HCT116 (cell line): ENCODE measurements at regions of chr20 and their contacts with region 1.

Region 1: DNA sequence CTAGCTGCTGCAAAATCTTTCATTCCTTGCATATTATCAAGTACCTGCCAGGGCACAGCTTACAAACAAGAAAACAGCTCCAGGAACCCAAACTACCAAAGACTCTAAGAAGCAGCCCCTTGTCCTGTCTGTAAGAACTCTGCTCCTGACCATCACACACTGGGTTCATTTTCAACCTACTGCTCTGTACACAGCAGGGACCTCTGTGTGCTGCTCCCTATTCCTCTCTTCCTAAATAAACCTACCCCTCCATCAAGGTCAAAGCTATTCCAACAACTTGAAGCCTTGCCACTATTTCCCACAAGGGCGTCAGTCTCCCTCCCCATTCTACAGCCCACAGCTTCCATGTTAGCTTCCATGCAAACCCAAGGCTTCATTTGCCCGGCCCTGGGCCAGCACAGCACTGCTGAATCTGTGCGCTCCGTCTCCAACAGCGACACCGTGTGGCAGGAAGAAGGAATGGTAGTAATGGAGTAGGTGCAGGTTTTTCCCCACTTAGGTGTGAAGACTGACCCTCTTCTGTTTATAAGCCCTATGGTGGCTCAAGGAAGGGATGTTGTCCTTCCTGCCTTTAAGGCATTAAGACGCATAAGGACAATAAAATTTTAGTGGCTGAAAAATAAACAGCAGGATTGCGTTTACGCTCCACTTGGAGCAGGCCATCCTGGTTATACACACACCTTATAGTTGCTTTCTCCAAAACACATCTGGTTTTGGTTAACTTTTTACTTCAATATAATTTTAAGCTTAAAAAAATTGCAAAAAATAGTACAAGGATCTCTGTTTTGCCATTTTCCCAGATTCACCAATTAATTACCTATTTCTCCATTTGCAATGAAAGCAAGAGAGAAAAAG is 115.2 kb upstream of the NXT1 start:
- DNase-seq: peak; percentile 52
- ATAC-seq: peak; percentile 98
- H3K4me3 ChIP-seq: no peak overlapping the region
- H3K27ac ChIP-seq: no peak overlapping the region
- H3K4me1 ChIP-seq: peaks cover 0 to 12% of the 10 kb centered on the region in 2 experiments; a peak in 2 of 4 replicates
- H3K27me3 ChIP-seq: peaks cover 8% of the 10 kb centered on the region
- CTCF ChIP-seq: peak; percentile 69 to 93 (median 86)
- POLR2A ChIP-seq: no peak
- RAD21 ChIP-seq: peak; percentile 74

Region 2: DNA sequence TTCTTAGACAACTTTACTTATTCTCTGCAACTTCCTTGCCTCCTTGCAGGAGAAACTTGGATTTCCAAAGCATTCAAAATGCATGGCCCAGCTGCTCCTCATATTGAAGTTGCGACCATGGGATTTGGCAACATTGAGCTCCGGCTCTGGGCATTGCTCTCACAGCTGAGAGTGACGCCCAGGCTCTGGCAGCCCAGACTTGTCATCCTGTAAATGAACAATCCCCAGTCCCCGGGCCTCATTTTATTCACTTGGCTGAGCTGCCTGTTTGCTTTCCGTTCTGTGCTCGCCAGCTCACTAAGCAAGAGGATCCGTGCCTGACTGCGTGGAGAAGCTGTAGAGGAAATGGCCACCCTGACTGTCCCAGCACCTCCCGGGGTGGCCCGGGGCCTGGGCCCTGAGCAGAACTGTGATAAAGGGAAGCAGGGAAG is 29.8 kb before region 1 on chr20:
- CTCF ChIA-PET with region 1: no interaction called
- POLR2A ChIA-PET with region 1: no interaction called
- RAD21 ChIA-PET with region 1: no interaction called
- intact Hi-C with region 1: no loop called
- DNase-seq: no peak
- ATAC-seq: no peak
- H3K4me3 ChIP-seq: no peak overlapping the region
- H3K27ac ChIP-seq: no peak overlapping the region
- H3K4me1 ChIP-seq: no peaks in the 10 kb centered on the region
- H3K27me3 ChIP-seq: peaks cover 23% of the 10 kb centered on the region
- CTCF ChIP-seq: no peak
- POLR2A ChIP-seq: no peak
- RAD21 ChIP-seq: no peak

Region 3: GRCh38 chr20:23245553-23246181 is 10.3 kb after region 1 on chr20:
- CTCF ChIA-PET with region 1: interaction called, 18 read pairs
- POLR2A ChIA-PET with region 1: no interaction called
- RAD21 ChIA-PET with region 1: no interaction called
- intact Hi-C with region 1: no loop called
- DNase-seq: no peak
- ATAC-seq: peak; percentile 95
- H3K4me3 ChIP-seq: no peak overlapping the region
- H3K27ac ChIP-seq: no peak overlapping the region
- H3K4me1 ChIP-seq: no peaks in the 10 kb centered on the region
- H3K27me3 ChIP-seq: peaks cover 29% of the 10 kb centered on the region
- CTCF ChIP-seq: peak; percentile 19 to 71 (median 65); a peak in 4 of 6 replicates
- POLR2A ChIP-seq: no peak
- RAD21 ChIP-seq: peak; percentile 37